ENCODE measurements at regions of chr9 and their contacts with region 1.

Region 1: GRCh38 chr9:135961277-135961705 is at the start of gene UBAC1:
- DNase-seq: peak; percentile 93 to 96
- ATAC-seq: peak; percentile 37 to 55
- H3K4me3 ChIP-seq: peak within 1 kb of the TSS; percentile 87 to 99 (median 95)
- H3K27ac ChIP-seq: peak within 1 kb of the TSS; percentile 97 to 100 (median 100)
- H3K4me1 ChIP-seq: peaks cover 26 to 37% of the 10 kb centered on the region in 2 donors
- H3K27me3 ChIP-seq: no peaks in the 10 kb centered on the region
- CTCF ChIP-seq: peak; percentile 44 to 66 (median 57)
- POLR2A ChIP-seq: no peak
- total RNA-seq, gene UBAC1: 218 to 263 (median 248) TPM

Region 2: DNA sequence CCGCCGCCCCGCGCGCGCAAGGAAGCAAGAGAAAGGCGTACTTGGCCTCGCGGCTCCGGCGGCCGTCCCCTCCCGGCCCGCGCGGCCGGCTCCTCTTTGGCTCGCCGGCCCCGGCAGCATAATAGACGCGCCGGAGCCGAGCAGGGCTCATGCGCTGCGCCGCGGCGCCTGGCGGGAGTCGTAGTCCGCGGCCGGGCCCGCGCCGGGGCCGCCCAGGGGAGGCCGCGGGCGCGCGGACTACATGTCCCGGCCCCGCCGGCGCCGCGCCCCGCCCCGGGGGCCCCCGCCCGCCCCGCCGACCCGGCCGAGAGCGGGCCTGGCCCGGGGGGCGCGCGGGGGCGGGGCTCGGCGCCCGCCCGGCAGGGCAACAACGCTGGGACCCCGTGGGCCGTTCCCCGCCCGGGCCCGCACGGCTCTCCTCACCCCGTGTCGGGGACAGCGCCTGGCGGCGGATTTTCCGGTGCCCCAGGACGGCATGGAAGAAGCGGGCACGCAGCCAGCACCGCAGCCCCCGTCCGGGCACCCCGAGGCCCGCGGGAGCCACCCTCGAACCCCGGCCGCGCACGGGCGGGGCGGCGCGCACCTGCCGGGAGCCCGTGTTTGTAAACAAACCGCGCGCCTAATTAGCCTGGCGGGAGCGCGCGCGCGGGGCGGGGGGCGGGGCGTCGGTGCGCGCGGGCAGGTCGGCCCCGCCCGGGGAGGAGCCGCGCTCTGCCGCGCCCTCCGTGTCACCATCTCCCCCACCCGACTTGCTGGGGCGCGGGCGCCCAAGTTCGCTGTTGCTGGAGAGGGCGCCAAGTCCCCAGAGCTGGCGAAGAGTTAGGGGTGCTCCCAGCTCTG is 1893.2 kb before region 1 on chr9 and contains the start of gene BRD3:
- in situ Hi-C with region 1: no loop called
- intact Hi-C with region 1: loop called (anchors 5 kb)
- DNase-seq: peak; percentile 74 to 84
- ATAC-seq: peak; percentile 80 to 84
- H3K4me3 ChIP-seq: peak within 1 kb of the TSS; percentile 60 to 89 (median 78)
- H3K27ac ChIP-seq: peak within 1 kb of the TSS; percentile 89 to 99 (median 98)
- H3K4me1 ChIP-seq: peaks cover 36 to 39% of the 10 kb centered on the region in 2 donors
- H3K27me3 ChIP-seq: no peaks in the 10 kb centered on the region
- CTCF ChIP-seq: no peak
- POLR2A ChIP-seq: peak; percentile 89 to 93
- total RNA-seq, gene BRD3: 10.8 to 21.5 (median 16.5) TPM

Region 3: GRCh38 chr9:135797507-135798262 is 163.6 kb before region 1 on chr9:
- in situ Hi-C with region 1: no loop called
- intact Hi-C with region 1: loop called (anchors 5 kb)
- DNase-seq: peak; percentile 53 to 58
- ATAC-seq: peak; percentile 82 to 89
- H3K4me3 ChIP-seq: no peak overlapping the region
- H3K27ac ChIP-seq: peak overlapping the region in 2 of 4 donors; percentile 54 to 72
- H3K4me1 ChIP-seq: peaks cover 15 to 17% of the 10 kb centered on the region in 2 donors
- H3K27me3 ChIP-seq: peaks cover 0 to 17% (median 13%) of the 10 kb centered on the region in 3 donors
- CTCF ChIP-seq: peak; percentile 65 to 79 (median 68)
- POLR2A ChIP-seq: no peak

Region 4: DNA sequence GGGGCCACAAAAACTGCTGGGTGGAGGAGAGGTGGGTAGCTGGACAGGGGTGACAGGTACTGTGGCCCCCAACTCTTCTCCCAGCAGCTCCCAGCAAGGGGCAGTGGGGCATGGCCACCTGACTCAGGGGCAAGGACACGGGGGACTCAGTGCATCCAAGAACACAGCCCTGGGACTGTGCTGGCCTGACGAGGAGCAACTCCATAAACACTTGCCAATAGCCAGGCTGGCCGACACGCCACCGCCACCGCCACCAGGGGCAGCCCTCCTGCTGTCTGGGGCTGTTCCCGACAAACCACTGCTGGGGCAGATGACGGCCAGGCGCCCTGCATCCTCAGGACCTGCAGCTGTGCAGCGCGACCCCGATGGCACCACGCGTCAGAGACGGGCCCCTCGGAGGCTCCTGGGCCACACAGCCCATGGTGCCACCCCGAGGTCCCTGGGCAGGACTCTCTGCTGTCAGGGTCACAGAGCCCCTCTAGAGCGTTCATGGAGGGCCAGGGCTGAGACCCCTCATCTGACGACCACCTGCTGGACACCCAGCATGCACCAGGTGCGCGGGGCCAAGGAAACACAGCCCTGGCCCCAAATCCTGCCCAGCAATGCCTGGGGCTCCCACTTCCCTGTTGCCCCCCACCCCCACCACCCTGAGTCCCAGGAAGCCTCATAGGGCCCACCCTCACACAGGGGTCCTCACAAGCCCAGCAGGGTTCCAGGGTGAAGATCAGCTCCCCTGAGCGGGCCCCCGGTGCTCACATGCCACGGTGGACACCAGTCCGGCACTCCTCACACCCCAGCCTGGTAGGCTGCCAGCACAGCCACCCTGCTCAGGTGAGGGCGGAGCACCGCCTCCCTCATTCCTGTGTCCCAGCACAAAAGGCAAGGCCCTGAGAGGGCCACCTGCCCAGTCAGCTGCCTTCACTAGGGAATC is 55.9 kb after region 1 on chr9:
- in situ Hi-C with region 1: no loop called
- intact Hi-C with region 1: no loop called
- DNase-seq: peak in 1 of 2 donors; percentile 10
- ATAC-seq: no peak
- H3K4me3 ChIP-seq: no peak overlapping the region
- H3K27ac ChIP-seq: no peak overlapping the region
- H3K4me1 ChIP-seq: peaks cover 18 to 19% of the 10 kb centered on the region in 2 donors
- H3K27me3 ChIP-seq: no peaks in the 10 kb centered on the region
- CTCF ChIP-seq: no peak
- POLR2A ChIP-seq: no peak

Region 5: GRCh38 chr9:136093995-136094881 is 132.9 kb after region 1 on chr9:
- in situ Hi-C with region 1: loop called in 1 of 4 experiments (anchors 10 kb)
- intact Hi-C with region 1: loop called (anchors 2 kb)
- DNase-seq: peak; percentile 91 to 93
- ATAC-seq: peak; percentile 51 to 57
- H3K4me3 ChIP-seq: peak overlapping the region; percentile 67 to 90 (median 78)
- H3K27ac ChIP-seq: peak overlapping the region; percentile 95 to 100 (median 98)
- H3K4me1 ChIP-seq: peaks cover 51 to 57% of the 10 kb centered on the region in 2 donors
- H3K27me3 ChIP-seq: no peaks in the 10 kb centered on the region
- CTCF ChIP-seq: peak in 2 of 5 experiments; percentile 24 to 27
- POLR2A ChIP-seq: peak; percentile 78 to 86

Region 6: GRCh38 chr9:136245219-136246150 is 284.2 kb after region 1 on chr9 and contains the start of gene QSOX2:
- in situ Hi-C with region 1: no loop called
- intact Hi-C with region 1: loop called (anchors 10 kb)
- DNase-seq: peak; percentile 73 to 77
- ATAC-seq: peak; percentile 90 to 91
- H3K4me3 ChIP-seq: peak within 1 kb of the TSS; percentile 67 to 99 (median 83)
- H3K27ac ChIP-seq: peak within 1 kb of the TSS; percentile 49 to 61 (median 58)
- H3K4me1 ChIP-seq: peaks cover 14 to 19% of the 10 kb centered on the region in 2 donors
- H3K27me3 ChIP-seq: no peaks in the 10 kb centered on the region
- CTCF ChIP-seq: no peak
- POLR2A ChIP-seq: no peak
- total RNA-seq, gene QSOX2: 3.3 to 5.8 (median 5.2) TPM

Region 7: GRCh38 chr9:136400038-136400834 is 438.9 kb after region 1 on chr9 and contains the start of gene SNAPC4:
- in situ Hi-C with region 1: no loop called
- intact Hi-C with region 1: loop called (anchors 10 kb)
- DNase-seq: peak; percentile 52 to 75
- ATAC-seq: peak; percentile 90 to 93
- H3K4me3 ChIP-seq: peak within 1 kb of the TSS; percentile 75 to 96 (median 94)
- H3K27ac ChIP-seq: peak within 1 kb of the TSS; percentile 54 to 78 (median 73)
- H3K4me1 ChIP-seq: peaks cover 14 to 18% of the 10 kb centered on the region in 2 donors
- H3K27me3 ChIP-seq: no peaks in the 10 kb centered on the region
- CTCF ChIP-seq: peak; percentile 84 to 98 (median 91)
- POLR2A ChIP-seq: peak; percentile 60 to 64
- total RNA-seq, gene SNAPC4: 2.3 to 6.0 (median 3.9) TPM

Measured in gastrocnemius medialis (tissue), 4 donors.